AG04449 (cell line): ENCODE measurements at regions of chr4 and their contacts with region 1.

Region 1: DNA sequence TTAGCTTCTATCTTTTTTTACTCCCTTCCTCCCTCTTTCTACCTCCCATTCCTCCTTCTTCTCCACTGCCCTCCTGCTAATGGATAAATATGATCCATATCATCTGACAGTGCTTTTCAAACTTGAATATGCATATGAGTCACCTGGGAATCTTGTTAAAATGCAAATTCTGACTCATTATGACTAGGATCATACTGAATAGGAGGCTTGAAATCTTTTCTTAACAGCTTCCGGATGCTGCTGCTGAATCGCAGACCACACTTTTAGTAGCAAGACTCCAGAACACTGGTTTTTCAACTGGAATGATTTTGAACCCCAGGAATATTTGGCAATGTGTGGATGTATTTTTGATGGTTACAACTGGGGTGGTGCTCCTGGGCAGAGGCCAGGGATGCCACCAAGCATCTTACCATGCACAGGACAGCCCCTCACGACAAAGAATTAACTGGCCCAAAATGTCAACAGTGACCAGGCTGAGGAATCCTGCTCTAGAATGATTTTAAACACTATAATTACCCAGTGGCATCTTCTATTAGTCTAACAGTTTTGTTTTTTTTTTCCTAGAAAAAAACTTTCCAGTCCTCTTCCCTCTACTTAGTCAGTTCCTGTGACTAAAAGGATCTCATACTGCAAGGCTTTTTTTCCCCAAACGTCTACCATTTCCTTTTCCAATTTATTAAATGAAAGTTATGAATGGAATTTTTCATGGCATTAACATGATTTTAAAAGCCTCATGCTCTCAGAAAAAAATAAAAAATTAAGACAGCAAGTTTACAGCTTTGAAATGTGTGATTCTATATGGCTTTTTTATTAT is 10.6 kb upstream of the PYURF start:
- DNase-seq: peak; percentile 77
- H3K4me3 ChIP-seq: no peak overlapping the region
- CTCF ChIP-seq: no peak

Region 2: DNA sequence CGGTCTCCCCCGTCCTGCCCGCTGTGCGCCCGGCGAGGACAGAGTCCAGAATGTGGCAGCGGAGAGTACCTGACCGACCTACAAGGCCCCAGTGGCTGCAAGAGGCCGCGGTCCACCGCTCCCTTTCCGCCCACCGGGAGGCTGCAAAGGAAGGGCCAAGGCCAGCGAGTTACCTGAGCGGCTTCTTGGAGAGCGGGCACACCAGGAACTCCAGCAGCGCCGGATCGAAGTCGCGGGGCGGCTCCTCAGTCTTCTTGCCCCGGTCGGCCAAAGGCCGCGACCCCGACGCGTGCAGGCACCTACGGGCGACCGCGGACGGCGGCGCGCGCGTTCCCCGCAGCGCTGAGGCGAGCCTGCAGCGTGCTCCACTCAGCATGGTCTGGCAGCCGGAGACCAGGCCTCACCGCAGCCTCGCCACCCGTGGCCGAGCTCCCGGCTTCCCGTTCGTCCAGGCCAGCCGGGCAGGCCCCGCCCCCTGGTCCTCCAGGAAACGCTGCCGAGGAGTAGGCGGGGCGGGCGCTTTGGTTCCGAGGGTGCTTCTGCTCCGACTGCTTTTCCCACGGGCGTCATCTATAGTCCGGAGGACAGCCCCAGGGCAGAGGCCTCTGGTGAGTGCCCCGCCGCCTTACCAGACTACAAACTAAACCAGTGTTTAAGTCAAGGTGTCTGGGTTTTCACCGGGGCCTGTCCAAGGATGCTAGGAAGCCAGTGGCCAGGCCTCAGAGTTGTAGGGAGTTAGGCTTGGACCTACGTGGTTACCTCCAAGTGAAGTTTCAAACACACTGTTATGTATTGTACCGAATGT is 10.6 kb before region 1 on chr4 and contains the start of gene PYURF:
- CTCF ChIA-PET with region 1: interaction called, 14 read pairs
- POLR2A ChIA-PET with region 1: no interaction called
- DNase-seq: peak; percentile 57
- H3K4me3 ChIP-seq: peak within 1 kb of the TSS; percentile 91
- CTCF ChIP-seq: no peak

Region 3: DNA sequence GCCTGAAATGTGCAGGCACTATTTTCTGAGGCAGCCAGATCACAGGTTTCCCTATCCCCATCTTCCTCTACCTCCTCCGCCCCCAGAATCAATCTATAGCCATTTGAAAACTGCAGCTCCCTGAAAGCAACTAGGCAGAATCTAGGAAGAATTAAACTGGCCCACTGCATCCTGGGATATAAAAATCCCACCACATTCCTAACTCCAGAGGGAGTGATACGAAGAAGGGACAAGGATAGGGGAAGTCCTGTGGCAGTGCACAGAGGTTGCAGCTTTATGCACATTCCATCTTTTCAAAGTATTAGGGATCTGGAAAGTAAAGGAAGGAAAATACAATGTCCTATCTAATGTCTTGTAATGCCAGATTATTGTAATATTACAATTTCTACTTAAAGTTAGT is 39.9 kb after region 1 on chr4:
- CTCF ChIA-PET with region 1: interaction called, 11 read pairs
- POLR2A ChIA-PET with region 1: no interaction called
- DNase-seq: no peak
- H3K4me3 ChIP-seq: no peak overlapping the region
- CTCF ChIP-seq: peak; percentile 40

Region 4: DNA sequence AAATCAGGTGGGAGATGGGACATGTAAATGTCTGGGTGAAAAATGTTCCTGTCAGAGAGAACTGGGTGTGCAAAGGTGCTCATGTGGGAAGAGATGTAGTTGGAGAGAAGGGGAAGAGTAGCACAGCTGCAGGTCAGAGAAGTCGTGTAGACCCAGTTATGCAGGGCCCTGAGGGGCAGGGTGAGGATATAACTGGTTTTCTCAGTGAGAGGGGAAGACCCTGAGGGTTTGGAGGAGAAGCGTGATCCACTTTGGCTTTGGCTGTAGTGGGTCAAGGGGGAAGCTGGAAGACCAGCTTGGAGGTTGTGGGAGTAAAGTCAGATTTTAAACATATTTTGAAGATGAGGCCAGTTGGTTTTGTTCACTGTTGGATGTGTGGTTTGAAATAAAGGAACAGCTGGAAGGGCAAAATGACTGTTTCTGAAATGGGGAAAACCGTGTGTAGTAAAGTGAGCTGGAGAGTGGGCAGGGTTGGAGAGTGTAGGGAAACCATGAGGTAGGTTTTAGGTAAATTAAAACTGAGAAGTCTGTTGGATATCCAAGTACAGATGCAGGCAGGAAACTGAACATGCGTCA is 119.3 kb after region 1 on chr4:
- CTCF ChIA-PET with region 1: interaction called, 18 read pairs
- POLR2A ChIA-PET with region 1: no interaction called
- DNase-seq: no peak
- H3K4me3 ChIP-seq: no peak overlapping the region
- CTCF ChIP-seq: no peak

Region 5: GRCh38 chr4:88659055-88659889 is 125.1 kb after region 1 on chr4:
- CTCF ChIA-PET with region 1: interaction called, 29 read pairs
- POLR2A ChIA-PET with region 1: interaction called, 3 read pairs
- DNase-seq: no peak
- H3K4me3 ChIP-seq: no peak overlapping the region
- CTCF ChIP-seq: peak; percentile 61

Region 6: DNA sequence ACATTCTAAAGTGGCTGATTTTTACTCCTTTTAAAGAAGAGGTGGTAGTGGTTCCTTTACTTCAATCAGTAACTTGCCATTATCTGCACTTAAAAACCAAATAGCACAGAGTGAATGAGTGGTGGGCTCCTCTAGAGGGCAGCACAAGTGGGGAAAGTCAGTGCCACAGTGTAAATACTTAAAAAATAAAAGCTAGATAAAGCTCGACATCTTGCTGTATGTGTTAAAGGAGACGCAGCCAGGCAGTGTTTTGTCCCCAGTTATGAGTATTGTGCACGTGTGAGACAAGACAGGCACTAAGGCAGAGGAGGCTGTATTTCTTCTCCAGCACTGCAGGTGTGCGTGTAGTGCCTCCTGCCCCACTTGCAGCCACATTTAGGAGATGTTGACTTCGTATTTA is 138.8 kb after region 1 on chr4:
- CTCF ChIA-PET with region 1: interaction called, 21 read pairs
- POLR2A ChIA-PET with region 1: no interaction called
- DNase-seq: no peak
- H3K4me3 ChIP-seq: no peak overlapping the region
- CTCF ChIP-seq: peak; percentile 50

Region 7: GRCh38 chr4:88706574-88706973 is 172.4 kb after region 1 on chr4:
- CTCF ChIA-PET with region 1: interaction called, 27 read pairs
- POLR2A ChIA-PET with region 1: no interaction called
- DNase-seq: no peak
- H3K4me3 ChIP-seq: no peak overlapping the region
- CTCF ChIP-seq: peak; percentile 60

Region 8: GRCh38 chr4:88870428-88870827 is 336.3 kb after region 1 on chr4:
- CTCF ChIA-PET with region 1: no interaction called
- POLR2A ChIA-PET with region 1: no interaction called
- DNase-seq: no peak
- H3K4me3 ChIP-seq: no peak overlapping the region
- CTCF ChIP-seq: no peak